ENCODE measurements at regions of chr20 and their contacts with region 1.

Region 1: GRCh38 chr20:868279-868678 is 34.8 kb downstream of the FAM110A start:
- DNase-seq: no peak
- H3K4me3 Mint-ChIP-seq: no peak overlapping the region
- H3K27ac Mint-ChIP-seq: no peak overlapping the region
- H3K4me1 Mint-ChIP-seq: peaks cover 5% of the 10 kb centered on the region
- H3K27me3 Mint-ChIP-seq: no peaks in the 10 kb centered on the region

Region 2: GRCh38 chr20:407953-408842 is 460.1 kb before region 1 on chr20 and contains the start of gene RBCK1:
- CTCF ChIA-PET with region 1: no interaction called
- POLR2A ChIA-PET with region 1: no interaction called
- DNase-seq: peak; percentile 90
- H3K4me3 Mint-ChIP-seq: peak within 1 kb of the TSS; percentile 96
- H3K27ac Mint-ChIP-seq: peak within 1 kb of the TSS; percentile 94
- H3K4me1 Mint-ChIP-seq: peaks cover 52% of the 10 kb centered on the region
- H3K27me3 Mint-ChIP-seq: no peaks in the 10 kb centered on the region
- total RNA-seq, gene RBCK1: 135 to 155 TPM

Region 3: GRCh38 chr20:854601-855000 is 13.7 kb before region 1 on chr20:
- CTCF ChIA-PET with region 1: interaction called, 3 read pairs
- POLR2A ChIA-PET with region 1: interaction called, 10 read pairs
- DNase-seq: no peak
- H3K4me3 Mint-ChIP-seq: no peak overlapping the region
- H3K27ac Mint-ChIP-seq: peak overlapping the region; percentile 51
- H3K4me1 Mint-ChIP-seq: peaks cover 89% of the 10 kb centered on the region
- H3K27me3 Mint-ChIP-seq: no peaks in the 10 kb centered on the region